ENCODE measurements at regions of chr10 and their contacts with region 1.

Region 1: GRCh38 chr10:125982260-125982948 is 86.0 kb downstream of the FANK1 start:
- DNase-seq: peak; percentile 52
- H3K4me3 ChIP-seq: no peak overlapping the region
- H3K27ac ChIP-seq: no peak overlapping the region
- H3K4me1 ChIP-seq: no peaks in the 10 kb centered on the region
- H3K27me3 ChIP-seq: no peaks in the 10 kb centered on the region
- CTCF ChIP-seq: peak; percentile 56 to 59

Region 2: GRCh38 chr10:125868372-125868975 is 113.9 kb before region 1 on chr10:
- CTCF ChIA-PET with region 1: no interaction called
- dilution Hi-C with region 1: loop called (anchors 5 kb)
- in situ Hi-C with region 1: no loop called
- intact Hi-C with region 1: loop called (anchors 1 kb)
- DNase-seq: peak; percentile 48
- H3K4me3 ChIP-seq: no peak overlapping the region
- H3K27ac ChIP-seq: no peak overlapping the region
- H3K4me1 ChIP-seq: peaks cover 16% of the 10 kb centered on the region
- H3K27me3 ChIP-seq: no peaks in the 10 kb centered on the region
- CTCF ChIP-seq: peak; percentile 90 to 98

Region 3: DNA sequence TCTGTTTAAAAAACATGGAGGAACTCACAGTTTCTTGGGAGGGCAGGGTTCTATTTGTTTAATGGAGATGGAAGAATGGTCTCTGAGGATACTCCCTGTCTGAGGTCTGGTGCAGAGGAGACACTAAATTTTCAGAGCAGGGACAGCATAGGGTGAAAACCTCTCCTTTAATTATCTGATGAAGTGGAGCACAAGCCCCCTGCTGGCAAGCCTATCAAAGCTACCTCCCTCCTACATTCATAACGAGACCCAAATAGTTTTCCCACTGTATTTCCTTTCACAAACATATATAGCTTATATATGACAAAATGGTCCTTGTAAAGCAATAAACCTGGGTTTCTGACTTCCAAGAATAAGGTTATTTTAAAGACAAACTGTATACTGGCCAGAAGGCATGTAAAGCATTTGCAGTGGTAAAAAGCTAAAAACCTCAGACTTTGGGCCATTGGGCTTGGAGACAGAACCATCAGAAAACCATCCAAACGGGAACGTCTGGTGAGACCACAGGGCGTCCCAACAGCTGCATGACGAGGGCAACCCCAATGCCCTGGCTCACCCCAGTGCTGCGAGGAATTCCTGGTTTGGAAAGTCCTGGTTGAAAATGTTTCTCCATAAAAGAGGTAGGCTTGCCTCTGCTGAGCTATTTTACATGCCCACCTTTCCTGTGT is 115.3 kb after region 1 on chr10:
- CTCF ChIA-PET with region 1: no interaction called
- dilution Hi-C with region 1: no loop called
- in situ Hi-C with region 1: no loop called
- intact Hi-C with region 1: loop called (anchors 1 kb)
- DNase-seq: no peak
- H3K4me3 ChIP-seq: no peak overlapping the region
- H3K27ac ChIP-seq: no peak overlapping the region
- H3K4me1 ChIP-seq: no peaks in the 10 kb centered on the region
- H3K27me3 ChIP-seq: no peaks in the 10 kb centered on the region
- CTCF ChIP-seq: peak; percentile 7 to 25

Region 4: DNA sequence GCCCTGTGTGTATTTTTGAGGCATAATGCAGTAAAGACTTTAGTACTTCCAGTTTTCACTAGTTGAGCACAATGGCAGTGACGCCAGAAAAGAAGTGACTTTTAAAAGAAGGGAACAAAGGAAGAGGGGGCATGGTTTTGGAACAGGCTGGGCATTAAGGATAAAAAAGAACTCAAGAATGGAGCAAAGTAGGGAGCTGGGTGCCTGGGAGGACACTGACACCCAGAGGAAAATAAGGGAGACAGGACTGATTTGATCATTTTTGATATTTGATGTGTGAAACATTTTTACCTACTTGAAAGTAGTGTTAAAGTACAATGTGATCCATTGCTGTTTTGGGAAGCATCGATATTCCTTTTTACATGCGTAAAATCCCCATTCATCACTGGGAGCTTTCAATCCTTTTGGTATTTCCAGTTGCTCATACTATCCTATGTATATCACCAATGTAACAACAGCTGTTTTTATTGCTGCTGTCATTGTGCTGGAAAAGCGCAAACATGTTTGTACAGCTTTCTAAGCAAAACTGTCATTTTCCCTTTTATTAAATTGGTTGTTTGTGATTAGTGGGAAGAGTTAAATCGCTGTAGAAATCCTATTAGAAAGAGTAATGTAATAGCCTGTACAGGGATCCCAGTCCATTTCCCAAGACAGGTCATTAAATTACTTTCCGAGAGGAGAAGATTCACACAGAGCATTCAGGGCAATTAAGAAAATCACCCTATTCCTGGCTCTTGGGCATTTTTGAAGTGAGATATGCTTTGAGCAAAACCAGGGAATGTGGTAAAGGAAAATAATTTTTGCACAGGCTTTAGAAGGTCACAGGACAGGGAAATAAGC is 320.6 kb after region 1 on chr10:
- CTCF ChIA-PET with region 1: no interaction called
- dilution Hi-C with region 1: no loop called
- in situ Hi-C with region 1: no loop called
- intact Hi-C with region 1: loop called (anchors 1 kb)
- DNase-seq: no peak
- H3K4me3 ChIP-seq: no peak overlapping the region
- H3K27ac ChIP-seq: no peak overlapping the region
- H3K4me1 ChIP-seq: no peaks in the 10 kb centered on the region
- H3K27me3 ChIP-seq: peaks cover 2% of the 10 kb centered on the region
- CTCF ChIP-seq: peak in 1 of 2 donors; percentile 42

Region 5: GRCh38 chr10:126504063-126504739 is 521.8 kb after region 1 on chr10:
- CTCF ChIA-PET with region 1: no interaction called
- dilution Hi-C with region 1: loop called (anchors 5 kb)
- in situ Hi-C with region 1: loop called (anchors 5 to 10 kb)
- intact Hi-C with region 1: loop called (anchors 1 kb)
- DNase-seq: peak; percentile 30
- H3K4me3 ChIP-seq: no peak overlapping the region
- H3K27ac ChIP-seq: no peak overlapping the region
- H3K4me1 ChIP-seq: no peaks in the 10 kb centered on the region
- H3K27me3 ChIP-seq: no peaks in the 10 kb centered on the region
- CTCF ChIP-seq: peak; percentile 80 to 83